Sigmoid colon (tissue), 7 donors: ENCODE measurements at regions of chr10 and their contacts with region 1.

Region 1: DNA sequence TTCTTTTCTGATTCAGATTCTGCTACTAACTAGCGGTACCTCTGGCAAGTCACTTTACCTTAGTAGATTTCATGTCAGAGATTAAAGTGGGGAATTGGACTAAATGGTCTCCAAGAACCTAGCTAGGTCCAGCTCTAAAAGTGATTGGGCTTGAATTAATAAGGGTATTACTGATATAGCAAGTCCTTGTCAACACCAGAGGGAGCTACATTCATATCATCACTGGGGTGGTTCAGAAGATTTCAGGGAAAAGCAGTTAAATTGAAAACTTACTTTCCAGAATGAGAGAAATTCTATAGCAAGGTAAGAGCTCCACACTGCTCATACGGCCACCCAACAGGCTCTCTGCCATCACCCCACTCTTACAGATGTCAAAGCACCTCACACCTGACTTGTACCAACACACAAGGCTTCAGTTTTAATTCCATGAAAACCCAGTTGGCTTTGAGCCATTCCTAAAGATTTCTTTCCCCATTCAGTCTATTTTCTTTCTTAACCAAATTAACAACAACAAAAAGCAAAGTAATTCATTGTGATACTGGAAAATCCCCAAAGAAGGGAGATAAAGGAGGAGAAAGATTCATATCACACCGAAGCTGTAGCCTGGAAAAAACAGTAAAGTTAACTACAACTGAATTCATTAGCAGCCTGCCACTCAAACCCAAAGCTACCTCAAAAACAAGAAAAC is 38.0 kb upstream of the SPOCK2 start:
- DNase-seq: no peak
- H3K4me3 ChIP-seq: no peak overlapping the region
- H3K27ac ChIP-seq: no peak overlapping the region
- H3K4me1 ChIP-seq: no peaks in the 10 kb centered on the region
- H3K27me3 ChIP-seq: no peaks in the 10 kb centered on the region
- CTCF ChIP-seq: peak in 1 of 4 experiments; percentile 8
- EP300 ChIP-seq: no peak
- POLR2A ChIP-seq: no peak

Region 2: GRCh38 chr10:71647526-71648253 is 478.6 kb before region 1 on chr10:
- intact Hi-C with region 1: no loop called
- DNase-seq: no peak
- H3K4me3 ChIP-seq: no peak overlapping the region
- H3K27ac ChIP-seq: no peak overlapping the region
- H3K4me1 ChIP-seq: no peaks in the 10 kb centered on the region
- H3K27me3 ChIP-seq: no peaks in the 10 kb centered on the region
- CTCF ChIP-seq: peak in 2 of 4 experiments; percentile 12 to 14
- EP300 ChIP-seq: no peak
- POLR2A ChIP-seq: no peak

Region 3: DNA sequence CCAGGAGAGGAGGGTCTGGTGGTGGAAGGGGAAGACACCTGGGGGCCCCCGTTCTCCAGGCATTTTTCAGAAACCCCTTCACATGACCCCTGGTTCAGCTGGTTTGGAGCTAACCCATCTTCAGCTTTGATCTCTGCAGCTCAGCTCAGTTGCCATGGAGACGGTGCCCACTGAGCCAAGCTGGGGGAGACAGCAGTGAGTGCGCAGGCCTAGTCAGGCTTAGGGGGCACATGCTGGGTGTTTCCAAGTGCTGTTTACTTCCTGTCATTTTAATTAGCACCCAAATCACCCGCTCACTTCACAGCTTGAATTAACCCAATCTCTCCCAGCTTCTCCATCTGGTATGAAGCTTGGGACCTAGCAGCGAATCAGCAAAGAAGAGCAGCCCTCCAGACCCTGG is 47.0 kb before region 1 on chr10:
- intact Hi-C with region 1: no loop called
- DNase-seq: peak; percentile 28
- H3K4me3 ChIP-seq: no peak overlapping the region
- H3K27ac ChIP-seq: no peak overlapping the region
- H3K4me1 ChIP-seq: no peaks in the 10 kb centered on the region
- H3K27me3 ChIP-seq: peaks cover 0 to 4% (median 0%) of the 10 kb centered on the region in 3 donors
- CTCF ChIP-seq: no peak
- EP300 ChIP-seq: no peak
- POLR2A ChIP-seq: no peak

Region 4: DNA sequence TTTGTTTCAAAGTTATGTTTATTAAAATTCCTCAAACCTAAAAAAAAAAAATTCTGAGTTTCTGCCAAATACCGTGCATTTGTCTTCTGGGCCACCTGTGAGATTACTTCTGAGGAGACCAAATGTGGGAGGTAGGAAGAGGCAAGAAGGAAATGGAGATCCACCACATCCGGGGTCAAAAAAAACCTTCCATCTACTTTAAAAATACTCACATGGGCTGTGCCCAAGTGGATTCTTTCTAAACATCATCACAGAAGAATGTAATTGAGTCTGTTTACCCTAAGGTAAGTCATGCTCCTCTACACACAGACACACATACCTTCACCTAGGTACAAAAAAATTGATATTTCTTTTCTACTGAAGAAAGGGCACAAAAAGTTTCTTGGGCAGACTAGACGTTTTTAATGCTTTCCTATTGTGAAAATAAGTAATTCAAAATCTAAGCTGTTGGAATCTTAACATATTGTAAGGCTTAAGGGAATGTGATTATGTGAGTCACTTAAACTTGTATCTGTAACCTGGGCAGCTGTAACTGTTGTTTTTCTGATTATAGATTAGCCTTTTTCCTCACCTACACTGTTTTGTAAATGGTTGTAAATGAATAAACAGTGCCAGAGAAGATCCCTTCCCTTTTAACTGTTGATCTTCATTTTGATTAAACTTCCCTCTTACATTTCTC is 18.9 kb before region 1 on chr10:
- intact Hi-C with region 1: loop called (anchors 1 kb)
- DNase-seq: no peak
- H3K4me3 ChIP-seq: no peak overlapping the region
- H3K27ac ChIP-seq: no peak overlapping the region
- H3K4me1 ChIP-seq: no peaks in the 10 kb centered on the region
- H3K27me3 ChIP-seq: no peaks in the 10 kb centered on the region
- CTCF ChIP-seq: no peak
- EP300 ChIP-seq: no peak
- POLR2A ChIP-seq: no peak